Thyroid gland (tissue), 4 donors: ENCODE measurements at regions of chr14 and their contacts with region 1.

Region 1: DNA sequence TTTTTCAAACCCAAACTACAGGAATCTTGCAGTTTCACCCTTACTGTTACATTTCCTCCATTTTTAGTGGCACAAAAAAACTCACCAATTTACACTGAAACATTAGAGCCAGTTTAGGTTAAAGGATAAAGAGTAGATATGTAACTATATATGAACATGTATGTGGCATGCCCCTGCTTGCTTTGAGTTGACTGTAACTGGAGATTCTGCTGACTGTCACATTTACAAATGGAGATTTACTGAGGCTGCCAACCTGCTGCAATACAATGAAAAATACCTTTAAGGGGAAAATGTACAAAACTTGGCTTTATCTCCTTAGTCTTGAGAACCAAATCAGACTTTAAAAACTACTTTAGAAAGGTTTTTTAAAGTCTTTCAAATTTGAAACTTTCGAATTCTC is 28.3 kb downstream of the STON2 start:
- DNase-seq: no peak
- H3K4me3 ChIP-seq: no peak overlapping the region
- H3K27ac ChIP-seq: no peak overlapping the region
- H3K4me1 ChIP-seq: peaks cover 7 to 24% of the 10 kb centered on the region in 2 donors
- H3K27me3 ChIP-seq: no peaks in the 10 kb centered on the region
- CTCF ChIP-seq: no peak
- POLR2A ChIP-seq: no peak

Region 2: GRCh38 chr14:81018251-81018650 is 353.6 kb before region 1 on chr14:
- intact Hi-C with region 1: no loop called
- DNase-seq: no peak
- H3K4me3 ChIP-seq: no peak overlapping the region
- H3K27ac ChIP-seq: peak overlapping the region in 2 of 3 donors; percentile 56 to 86
- H3K4me1 ChIP-seq: peaks cover 41 to 43% of the 10 kb centered on the region in 2 donors
- H3K27me3 ChIP-seq: no peaks in the 10 kb centered on the region
- CTCF ChIP-seq: no peak
- POLR2A ChIP-seq: no peak

Region 3: DNA sequence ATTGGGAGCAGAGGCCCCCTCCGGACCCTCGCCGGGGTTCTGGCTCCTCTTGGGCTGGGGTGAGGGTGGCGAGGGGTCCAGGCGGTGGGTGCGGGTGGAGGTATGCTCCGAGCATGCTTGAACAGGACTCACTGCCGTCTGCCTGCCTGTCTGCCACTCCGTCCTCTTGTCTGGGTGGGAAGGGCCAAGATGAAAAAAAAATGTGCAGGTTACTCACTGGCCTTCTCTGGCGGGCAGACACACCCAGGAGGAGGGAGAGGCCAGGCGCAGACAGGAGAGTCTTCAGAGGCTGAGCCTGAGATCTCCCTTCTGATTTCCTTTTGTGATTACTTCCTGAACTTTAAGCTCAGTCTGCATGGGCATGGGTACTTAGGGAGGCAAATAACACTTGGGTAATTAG is 47.8 kb before region 1 on chr14:
- intact Hi-C with region 1: loop called (anchors 10 kb)
- DNase-seq: peak; percentile 84 to 87
- H3K4me3 ChIP-seq: peak overlapping the region in 1 of 3 donors; percentile 21
- H3K27ac ChIP-seq: peak overlapping the region; percentile 51 to 79 (median 73)
- H3K4me1 ChIP-seq: peaks cover 26 to 42% of the 10 kb centered on the region in 2 donors
- H3K27me3 ChIP-seq: no peaks in the 10 kb centered on the region
- CTCF ChIP-seq: no peak
- POLR2A ChIP-seq: peak in 1 of 2 donors; percentile 89

Region 4: DNA sequence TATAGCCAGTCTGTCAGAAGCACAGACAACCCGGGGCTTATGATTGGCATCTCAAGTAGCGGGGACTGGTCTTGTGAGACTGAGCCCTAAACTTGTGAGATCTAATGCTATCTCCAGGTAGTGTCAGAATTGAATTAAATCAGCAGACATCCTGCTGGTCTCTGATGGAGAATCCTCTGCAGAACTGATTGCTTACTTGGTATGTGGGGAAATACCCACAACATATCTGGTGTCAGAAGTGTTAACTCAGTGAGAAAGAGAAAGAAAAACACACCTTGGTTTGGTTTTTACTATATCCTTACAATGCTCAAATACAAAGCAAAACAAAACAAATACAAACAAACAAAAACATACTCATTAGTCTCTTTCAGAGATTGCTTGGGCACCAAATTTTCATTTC is 151.8 kb after region 1 on chr14:
- intact Hi-C with region 1: no loop called
- DNase-seq: no peak
- H3K4me3 ChIP-seq: no peak overlapping the region
- H3K27ac ChIP-seq: no peak overlapping the region
- H3K4me1 ChIP-seq: peaks cover 14 to 20% of the 10 kb centered on the region in 2 donors
- H3K27me3 ChIP-seq: no peaks in the 10 kb centered on the region
- CTCF ChIP-seq: no peak
- POLR2A ChIP-seq: no peak